PC-9 (cell line): ENCODE measurements at regions of chr5 and their contacts with region 1.

Region 1: DNA sequence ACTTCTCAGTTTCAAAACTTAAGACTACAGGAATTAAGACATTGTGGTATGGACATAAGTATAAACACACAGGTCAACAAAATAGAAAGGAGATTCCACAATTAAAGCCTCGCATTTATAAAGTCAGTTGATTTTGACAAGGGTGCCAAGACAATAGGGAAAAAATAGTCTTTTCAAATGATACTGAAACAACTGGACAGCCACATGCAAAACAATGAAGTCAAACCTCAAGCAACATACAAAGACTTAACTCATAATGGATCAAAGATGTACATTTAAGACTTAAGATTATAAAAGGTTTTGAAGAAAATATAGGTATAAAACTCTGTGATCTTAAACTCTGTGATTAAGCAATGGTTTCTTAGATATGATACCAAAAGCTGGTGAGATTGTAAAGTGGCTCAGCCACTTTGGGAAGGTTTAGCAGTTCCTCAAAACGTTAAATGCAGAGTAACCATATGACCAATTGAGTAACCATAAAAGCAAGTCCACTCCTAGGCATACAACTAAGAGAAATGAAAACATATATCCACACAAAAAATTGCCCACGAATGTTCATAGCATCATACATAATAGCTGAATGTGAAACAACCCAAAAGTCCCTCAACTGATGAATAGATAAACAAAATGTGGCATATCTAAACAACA is 22.0 kb downstream of the HINT1 start:
- DNase-seq: no peak
- H3K4me3 ChIP-seq: no peak overlapping the region
- H3K27ac ChIP-seq: no peak overlapping the region
- H3K4me1 ChIP-seq: no peaks in the 10 kb centered on the region
- H3K27me3 ChIP-seq: no peaks in the 10 kb centered on the region
- CTCF ChIP-seq: no peak

Region 2: GRCh38 chr5:131252824-131253171 is 109.7 kb after region 1 on chr5:
- CTCF ChIA-PET with region 1: interaction called, 20 read pairs
- POLR2A ChIA-PET with region 1: no interaction called
- intact Hi-C with region 1: no loop called
- DNase-seq: no peak
- H3K4me3 ChIP-seq: no peak overlapping the region
- H3K27ac ChIP-seq: no peak overlapping the region
- H3K4me1 ChIP-seq: peaks cover 3% of the 10 kb centered on the region
- H3K27me3 ChIP-seq: no peaks in the 10 kb centered on the region
- CTCF ChIP-seq: no peak